Aorta (tissue), 5 donors: ENCODE measurements at regions of chr9 and their contacts with region 1.

Region 1: GRCh38 chr9:19456996-19457692 is 48.3 kb downstream of the ACER2 start:
- DNase-seq: peak in 1 of 2 donors; percentile 58
- ATAC-seq: peak; percentile 94
- H3K4me3 ChIP-seq: no peak overlapping the region
- H3K27ac ChIP-seq: peak overlapping the region; percentile 80 to 87
- H3K4me1 ChIP-seq: peaks cover 0 to 3% of the 10 kb centered on the region in 2 donors
- H3K27me3 ChIP-seq: no peaks in the 10 kb centered on the region

Region 2: DNA sequence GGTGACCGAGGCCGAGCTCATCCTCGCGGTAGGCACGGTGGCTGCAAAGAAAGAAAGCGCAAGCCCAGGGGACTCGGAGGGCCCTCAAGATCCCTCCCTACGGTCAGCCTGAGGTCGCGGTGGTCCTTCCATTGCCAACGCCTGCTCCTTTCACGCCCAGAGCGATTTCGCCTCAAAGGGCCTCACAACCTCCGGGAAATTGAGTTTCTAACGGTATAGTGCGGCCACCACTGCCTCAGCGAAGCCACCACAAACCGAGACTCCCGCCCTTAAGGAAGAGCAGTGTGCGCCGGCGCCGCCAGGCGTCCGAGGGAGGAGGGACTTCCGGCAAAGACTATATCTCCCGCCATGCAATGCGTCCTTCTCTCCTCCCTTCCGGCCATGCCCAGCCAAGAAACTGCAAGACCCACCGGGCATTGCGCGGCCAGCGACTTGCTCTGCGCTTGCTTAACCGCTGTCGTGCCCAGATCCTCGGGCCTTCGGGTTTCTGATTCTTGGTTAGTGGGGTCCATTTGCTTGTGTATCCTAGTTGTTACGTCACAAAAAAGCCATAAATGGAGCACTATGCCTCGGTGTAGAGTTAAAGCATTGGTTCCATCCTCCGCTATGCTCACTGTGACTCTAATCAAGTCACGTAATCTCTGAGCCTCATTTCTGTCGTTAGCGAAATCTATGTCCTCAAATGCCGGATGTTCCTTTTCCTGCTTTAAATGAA is 354.4 kb before region 1 on chr9 and contains the start of gene HAUS6:
- intact Hi-C with region 1: loop called in 1 of 2 experiments (anchors 10 kb)
- DNase-seq: peak; percentile 98 to 99
- ATAC-seq: peak; percentile 99
- H3K4me3 ChIP-seq: peak within 1 kb of the TSS; percentile 23 to 76
- H3K27ac ChIP-seq: peak within 1 kb of the TSS in 1 of 2 donors; percentile 66
- H3K4me1 ChIP-seq: no peaks in the 10 kb centered on the region
- H3K27me3 ChIP-seq: no peaks in the 10 kb centered on the region
- total RNA-seq, gene HAUS6: 8.4 to 9.2 TPM